GM13976 (cell line): ENCODE measurements at regions of chr3 and their contacts with region 1.

Region 1: DNA sequence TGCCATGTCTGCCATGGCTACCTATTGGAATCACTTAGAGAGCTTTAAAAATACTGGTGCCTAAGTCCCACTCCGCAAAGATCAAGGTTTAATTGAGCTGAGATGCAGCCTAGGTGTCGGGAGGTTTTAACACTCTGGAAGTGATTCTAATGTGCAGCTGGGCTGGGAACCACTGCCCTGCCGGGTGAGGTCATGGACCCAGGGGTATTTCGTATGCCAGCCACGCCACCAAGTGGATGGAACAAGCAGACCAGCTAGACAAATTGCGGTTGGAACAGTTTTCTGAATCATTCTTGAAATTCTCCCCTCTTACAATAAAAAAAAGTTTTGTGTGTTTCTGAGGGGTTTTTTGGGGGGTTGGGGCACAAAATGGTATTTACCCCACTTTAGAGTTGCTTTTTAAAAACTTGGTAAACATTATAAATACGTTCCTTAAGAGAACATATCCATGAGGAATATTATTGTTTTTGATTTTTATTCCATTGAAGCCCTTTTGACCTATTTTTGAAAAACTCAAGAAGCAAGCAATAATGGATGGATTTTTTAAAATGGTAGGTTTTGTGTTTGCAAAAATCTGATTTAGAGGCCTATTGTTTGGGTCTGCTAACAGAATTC is 66.2 kb upstream of the CSTA start:
- DNase-seq: peak; percentile 75
- CTCF ChIP-seq: peak; percentile 73

Region 2: DNA sequence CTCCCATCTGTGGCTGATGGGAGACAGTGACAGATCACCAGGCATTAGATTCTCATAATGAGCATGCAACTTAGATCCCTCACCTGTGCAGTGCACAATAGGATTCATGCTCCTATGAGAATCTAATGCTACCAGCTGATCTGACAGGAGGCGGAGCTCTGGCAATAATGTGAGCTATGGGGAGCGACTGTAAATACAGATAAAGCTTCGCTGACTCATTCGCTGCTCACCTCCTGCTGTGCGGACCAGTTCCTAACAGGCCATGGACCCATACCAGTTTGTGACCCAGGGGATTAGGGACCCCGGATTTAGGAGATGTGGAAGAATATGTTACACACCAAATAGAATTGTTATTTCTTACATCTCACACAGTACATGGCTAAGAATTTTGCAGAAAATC is 684.4 kb before region 1 on chr3:
- in situ Hi-C with region 1: loop called (anchors 25 kb)
- DNase-seq: no peak
- CTCF ChIP-seq: no peak

Region 3: DNA sequence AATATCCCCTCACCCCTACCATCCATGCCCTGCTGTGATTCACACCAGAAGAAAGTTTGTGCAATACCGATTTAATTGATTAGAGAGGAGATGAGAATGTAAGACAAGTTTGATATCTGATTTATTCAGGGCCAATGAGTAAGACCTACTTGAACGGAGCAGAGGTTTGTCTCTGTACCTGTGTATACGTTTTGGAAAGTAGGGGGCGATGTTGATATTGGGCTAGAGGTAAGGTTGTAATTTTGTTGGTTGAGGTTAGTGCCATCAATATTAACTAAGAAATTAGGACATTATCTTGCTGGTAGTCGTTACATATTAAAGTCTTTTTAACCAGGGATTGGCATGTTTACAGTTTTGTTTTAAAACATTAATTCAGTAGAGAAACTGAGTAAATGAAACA is 403.3 kb before region 1 on chr3:
- in situ Hi-C with region 1: loop called (anchors 25 kb)
- DNase-seq: no peak
- CTCF ChIP-seq: no peak

Region 4: DNA sequence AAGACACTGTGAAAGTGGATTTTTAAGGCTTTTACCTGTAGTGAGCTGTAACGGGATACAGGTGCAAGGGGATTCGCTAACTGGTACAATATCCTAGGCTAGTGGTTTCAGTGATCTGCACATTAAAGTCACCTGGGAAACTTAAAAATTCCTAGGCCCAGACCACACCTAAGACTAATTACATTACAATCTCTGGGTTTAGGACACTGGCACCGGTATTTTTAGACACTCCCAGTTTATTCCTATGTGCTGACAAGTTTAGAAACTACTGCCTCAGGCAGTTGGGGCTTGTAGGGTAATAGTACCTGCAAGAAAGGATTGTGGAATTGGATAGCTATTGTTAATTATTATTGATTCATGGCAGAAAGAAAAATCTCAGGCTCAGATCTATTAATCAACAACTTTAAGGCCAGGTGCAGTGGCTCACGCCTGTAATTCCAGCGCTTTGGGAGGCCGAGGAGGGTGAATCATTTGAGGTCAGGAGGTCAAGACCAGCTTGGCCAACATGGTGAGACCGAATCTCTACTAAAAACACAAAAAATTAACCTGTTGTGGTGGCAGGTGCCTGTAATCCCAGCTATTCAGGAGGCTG is 125.8 kb before region 1 on chr3:
- in situ Hi-C with region 1: no loop called
- DNase-seq: no peak
- CTCF ChIP-seq: no peak

Region 5: GRCh38 chr3:122589297-122589696 is 330.4 kb after region 1 on chr3:
- in situ Hi-C with region 1: no loop called
- DNase-seq: no peak
- CTCF ChIP-seq: no peak

Region 6: GRCh38 chr3:122691195-122691594 is 432.3 kb after region 1 on chr3:
- in situ Hi-C with region 1: no loop called
- DNase-seq: no peak
- CTCF ChIP-seq: no peak